Upper lobe of right lung (tissue), 1 donor: ENCODE measurements at regions of chr3 and their contacts with region 1.

Region 1: GRCh38 chr3:16048435-16049318 is 125.8 kb upstream of the GALNT15 start:
- DNase-seq: no peak
- ATAC-seq: peak; percentile 94
- H3K4me3 ChIP-seq: no peak overlapping the region
- H3K27ac ChIP-seq: no peak overlapping the region
- H3K4me1 ChIP-seq: no peaks in the 10 kb centered on the region
- H3K27me3 ChIP-seq: no peaks in the 10 kb centered on the region
- CTCF ChIP-seq: peak; percentile 84

Region 2: GRCh38 chr3:15989419-15989818 is 59.3 kb before region 1 on chr3:
- intact Hi-C with region 1: no loop called
- DNase-seq: no peak
- ATAC-seq: no peak
- H3K4me3 ChIP-seq: no peak overlapping the region
- H3K27ac ChIP-seq: no peak overlapping the region
- H3K4me1 ChIP-seq: no peaks in the 10 kb centered on the region
- H3K27me3 ChIP-seq: no peaks in the 10 kb centered on the region
- CTCF ChIP-seq: peak; percentile 22

Region 3: GRCh38 chr3:16177962-16178627 is 129.4 kb after region 1 on chr3:
- intact Hi-C with region 1: loop called (anchors 5 kb)
- DNase-seq: peak; percentile 86
- ATAC-seq: peak; percentile 88
- H3K4me3 ChIP-seq: peak overlapping the region; percentile 40
- H3K27ac ChIP-seq: no peak overlapping the region
- H3K4me1 ChIP-seq: peaks cover 30% of the 10 kb centered on the region
- H3K27me3 ChIP-seq: no peaks in the 10 kb centered on the region
- CTCF ChIP-seq: peak; percentile 98

Region 4: DNA sequence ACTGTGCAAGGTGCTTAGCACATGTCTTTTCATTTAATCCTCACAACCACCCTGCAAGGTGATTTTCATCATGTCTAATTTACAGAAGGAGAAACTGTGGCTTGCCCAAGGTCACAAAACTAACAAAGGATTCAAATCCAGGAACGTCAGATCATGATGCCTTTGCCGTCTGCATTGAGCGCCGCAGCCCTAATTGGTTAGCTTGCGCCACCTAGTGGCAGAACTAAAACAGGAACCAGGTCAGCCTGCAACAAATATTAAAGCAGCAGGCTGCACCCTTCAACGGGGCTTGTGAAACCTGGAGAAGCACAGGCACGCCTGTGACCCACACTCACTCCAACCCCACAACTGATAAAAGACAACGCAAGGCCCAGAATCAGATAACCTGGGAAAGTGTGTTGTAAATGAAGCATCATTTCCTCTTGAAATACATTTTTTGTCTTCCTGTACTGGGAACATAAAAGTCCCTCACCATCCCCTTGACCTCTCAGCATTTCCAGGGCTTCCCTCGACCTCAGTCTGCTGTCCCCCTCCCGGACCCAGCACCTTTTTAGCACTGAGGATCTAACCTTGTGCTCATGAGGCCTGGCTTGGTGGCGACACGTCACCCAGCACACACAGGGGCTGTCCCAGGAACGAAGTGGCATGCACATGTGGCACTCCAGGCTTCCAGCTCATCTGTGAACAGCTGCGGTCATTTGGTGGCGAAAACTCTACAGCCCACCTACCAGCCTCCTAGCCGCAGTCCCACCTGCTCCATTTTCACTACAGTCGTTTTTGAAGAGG is 198.8 kb after region 1 on chr3:
- intact Hi-C with region 1: loop called (anchors 5 kb)
- DNase-seq: peak; percentile 77
- ATAC-seq: peak; percentile 93
- H3K4me3 ChIP-seq: no peak overlapping the region
- H3K27ac ChIP-seq: no peak overlapping the region
- H3K4me1 ChIP-seq: peaks cover 5% of the 10 kb centered on the region
- H3K27me3 ChIP-seq: no peaks in the 10 kb centered on the region
- CTCF ChIP-seq: peak; percentile 98

Region 5: DNA sequence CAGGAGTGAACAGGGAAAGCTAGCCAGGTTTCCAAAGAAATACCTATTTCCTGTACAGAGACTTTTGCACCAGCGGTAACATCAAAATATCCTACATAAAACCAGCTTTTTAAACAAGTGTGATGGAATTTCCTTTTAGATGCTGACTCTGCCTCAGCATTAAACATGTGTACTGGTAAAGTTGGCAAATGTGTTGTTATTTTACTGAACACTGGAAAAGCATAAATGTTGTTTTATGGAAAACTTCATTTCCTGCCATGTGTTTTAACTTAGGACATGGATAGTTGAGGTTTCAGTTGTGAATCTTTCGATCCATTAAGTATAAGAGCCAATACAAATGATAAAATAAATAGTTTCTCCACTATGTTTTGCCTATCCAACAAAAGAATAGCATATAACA is 232.0 kb after region 1 on chr3:
- intact Hi-C with region 1: no loop called
- DNase-seq: no peak
- ATAC-seq: no peak
- H3K4me3 ChIP-seq: no peak overlapping the region
- H3K27ac ChIP-seq: no peak overlapping the region
- H3K4me1 ChIP-seq: no peaks in the 10 kb centered on the region
- H3K27me3 ChIP-seq: no peaks in the 10 kb centered on the region
- CTCF ChIP-seq: no peak